ENCODE measurements at regions of chr2 and their contacts with region 1.

Region 1: GRCh38 chr2:11129598-11130449 is 25.4 kb upstream of the SLC66A3 start:
- DNase-seq: no peak
- H3K4me3 ChIP-seq: peak overlapping the region; percentile 51 to 54
- H3K27ac ChIP-seq: no peak overlapping the region
- H3K4me1 ChIP-seq: peaks cover 4 to 24% of the 10 kb centered on the region in 2 donors
- H3K27me3 ChIP-seq: no peaks in the 10 kb centered on the region
- CTCF ChIP-seq: no peak

Region 2: GRCh38 chr2:10873790-10874437 is 255.9 kb before region 1 on chr2:
- intact Hi-C with region 1: no loop called
- DNase-seq: no peak
- H3K4me3 ChIP-seq: no peak overlapping the region
- H3K27ac ChIP-seq: no peak overlapping the region
- H3K4me1 ChIP-seq: no peaks in the 10 kb centered on the region
- H3K27me3 ChIP-seq: no peaks in the 10 kb centered on the region
- CTCF ChIP-seq: no peak

Region 3: DNA sequence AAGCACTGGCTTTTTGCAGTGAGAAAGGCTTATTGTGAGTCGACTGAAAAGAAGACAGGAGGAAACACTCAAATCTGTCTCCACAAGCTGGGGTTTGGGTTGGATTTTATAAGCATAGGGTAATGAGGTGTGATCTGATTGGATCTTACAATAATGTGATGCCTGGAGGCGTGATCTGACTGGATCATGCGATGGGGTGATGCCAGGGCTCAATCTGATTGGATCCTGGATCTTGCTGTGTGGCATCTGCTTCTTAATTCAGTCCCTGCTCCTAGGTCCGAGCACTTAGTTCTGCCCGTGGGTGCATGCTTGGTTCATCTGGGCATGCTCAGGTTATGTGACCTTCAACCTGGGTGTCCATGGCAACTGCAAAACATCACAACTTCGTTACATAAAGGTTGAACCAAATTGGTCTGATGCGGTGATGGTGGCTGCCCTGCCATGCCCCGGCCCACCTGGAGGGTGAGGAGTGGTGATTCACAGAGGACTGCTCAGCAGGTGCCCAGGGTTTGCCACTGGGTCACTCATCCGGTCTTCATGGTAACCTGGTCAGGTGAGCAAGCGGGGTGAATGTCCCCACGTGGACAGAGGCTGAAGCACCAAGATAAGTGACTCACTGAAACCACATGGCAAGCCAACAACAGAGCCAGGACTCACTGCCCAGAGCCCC is 107.1 kb before region 1 on chr2:
- intact Hi-C with region 1: no loop called
- DNase-seq: no peak
- H3K4me3 ChIP-seq: no peak overlapping the region
- H3K27ac ChIP-seq: no peak overlapping the region
- H3K4me1 ChIP-seq: no peaks in the 10 kb centered on the region
- H3K27me3 ChIP-seq: no peaks in the 10 kb centered on the region
- CTCF ChIP-seq: no peak

Region 4: DNA sequence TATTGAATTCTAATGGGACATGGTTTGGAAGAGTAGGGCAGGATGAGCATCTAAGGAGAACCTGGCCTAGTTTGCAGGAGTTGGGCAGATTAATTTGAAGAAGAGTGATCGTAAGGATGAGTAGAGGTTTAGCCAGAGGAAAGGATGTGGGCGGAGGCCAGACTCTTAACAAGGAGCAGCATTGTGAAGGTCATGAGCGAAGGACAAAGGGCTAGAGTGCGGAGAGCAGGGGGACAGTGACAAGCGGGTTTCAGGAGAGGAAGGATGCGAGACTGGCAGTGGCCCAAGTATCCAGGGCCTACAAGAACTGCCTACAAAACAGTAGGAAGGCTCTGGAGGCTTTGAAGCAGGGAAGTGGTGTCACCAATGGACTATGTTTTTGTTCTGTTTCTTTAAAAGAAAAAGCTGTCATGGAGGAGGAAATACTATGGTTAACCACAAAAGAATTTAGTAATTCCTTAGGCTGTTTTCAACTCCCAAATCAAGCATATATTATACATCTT is 45.5 kb after region 1 on chr2:
- intact Hi-C with region 1: no loop called
- DNase-seq: no peak
- H3K4me3 ChIP-seq: no peak overlapping the region
- H3K27ac ChIP-seq: peak overlapping the region in 1 of 2 donors; percentile 16
- H3K4me1 ChIP-seq: no peaks in the 10 kb centered on the region
- H3K27me3 ChIP-seq: no peaks in the 10 kb centered on the region
- CTCF ChIP-seq: no peak

Region 5: GRCh38 chr2:11187083-11187619 is 57.3 kb after region 1 on chr2:
- intact Hi-C with region 1: loop called (anchors 5 kb)
- DNase-seq: no peak
- H3K4me3 ChIP-seq: no peak overlapping the region
- H3K27ac ChIP-seq: no peak overlapping the region
- H3K4me1 ChIP-seq: no peaks in the 10 kb centered on the region
- H3K27me3 ChIP-seq: no peaks in the 10 kb centered on the region
- CTCF ChIP-seq: no peak

Region 6: DNA sequence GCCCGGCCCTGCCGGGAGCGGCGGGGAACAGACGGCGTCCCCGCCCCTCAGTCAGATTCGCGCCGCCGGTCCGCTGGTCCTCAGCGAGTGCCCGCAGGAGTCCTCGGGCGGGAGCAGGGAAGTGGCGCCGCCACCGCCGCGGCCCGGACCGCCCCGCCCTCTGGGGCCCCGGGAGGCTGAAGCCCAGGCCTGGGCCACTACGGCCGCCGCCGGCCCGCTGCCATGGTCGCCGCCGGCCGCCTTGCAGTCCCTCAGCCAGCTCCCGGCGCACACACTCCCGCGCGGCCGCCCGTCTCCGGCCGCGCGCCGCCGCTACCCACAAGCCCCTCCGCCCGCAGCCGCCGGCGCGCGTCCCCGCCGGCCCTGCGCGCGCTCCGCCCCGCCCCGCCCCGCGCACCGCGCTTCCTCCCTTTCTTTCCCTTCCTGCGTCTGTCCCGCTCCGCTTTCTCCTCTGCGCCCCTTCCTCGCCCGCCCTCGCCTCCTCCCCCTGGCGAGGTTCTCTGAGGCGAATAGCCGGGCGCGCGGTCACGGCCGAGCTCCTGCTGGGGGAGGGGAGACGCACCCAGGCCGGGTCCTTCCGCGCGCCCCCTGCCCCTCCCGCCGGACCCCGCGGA is 214.6 kb after region 1 on chr2 and contains the start of gene ROCK2:
- intact Hi-C with region 1: loop called (anchors 5 kb)
- DNase-seq: peak; percentile 28 to 92
- H3K4me3 ChIP-seq: peak within 1 kb of the TSS; percentile 100
- H3K27ac ChIP-seq: peak within 1 kb of the TSS; percentile 99 to 100
- H3K4me1 ChIP-seq: peaks cover 0 to 14% of the 10 kb centered on the region in 2 donors
- H3K27me3 ChIP-seq: no peaks in the 10 kb centered on the region
- CTCF ChIP-seq: no peak
- total RNA-seq, gene ROCK2: 33.0 TPM

Region 7: GRCh38 chr2:11446733-11447248 is 317.0 kb after region 1 on chr2:
- intact Hi-C with region 1: loop called (anchors 2 kb)
- DNase-seq: peak in 1 of 2 donors; percentile 77
- H3K4me3 ChIP-seq: no peak overlapping the region
- H3K27ac ChIP-seq: no peak overlapping the region
- H3K4me1 ChIP-seq: no peaks in the 10 kb centered on the region
- H3K27me3 ChIP-seq: no peaks in the 10 kb centered on the region
- CTCF ChIP-seq: peak; percentile 63 to 84 (median 64)

Measured in ascending aorta (tissue), 2 donors.